ENCODE measurements at regions of chr13 and their contacts with region 1.

Region 1: DNA sequence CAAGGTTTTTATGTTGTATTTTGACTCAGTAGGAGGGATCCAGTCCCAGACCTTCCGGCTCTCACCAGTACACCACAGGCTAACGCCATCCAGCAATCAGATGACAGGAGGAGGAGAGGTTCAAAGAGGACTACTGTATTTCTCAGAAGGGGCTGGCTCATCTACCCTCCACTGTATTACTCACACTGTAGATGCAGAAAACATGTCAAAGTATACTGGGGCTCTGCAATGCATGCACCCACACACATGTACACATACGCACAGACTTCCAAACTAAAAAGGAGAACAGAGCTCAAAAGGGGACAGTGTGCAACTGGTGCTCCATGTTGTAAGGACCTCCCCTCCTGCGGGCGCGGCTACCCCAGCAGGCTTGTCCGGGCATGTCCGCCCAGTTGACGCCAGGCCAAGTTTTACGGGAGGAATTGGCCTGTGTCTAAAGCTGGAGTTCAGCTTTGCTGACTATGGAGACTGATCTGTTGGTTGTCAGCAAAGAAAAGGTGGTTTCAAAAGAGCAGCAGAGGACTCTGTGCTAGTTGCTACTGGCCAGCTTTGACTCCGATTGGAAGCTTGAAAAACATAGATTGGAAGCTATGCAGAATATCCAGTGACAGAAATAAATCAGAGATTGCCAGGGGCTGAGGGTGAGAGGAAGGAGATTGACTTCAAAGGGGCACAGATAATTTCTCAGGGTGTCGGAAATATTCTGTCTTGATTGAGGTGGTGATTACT is 314.2 kb downstream of the DLEU7 start:
- DNase-seq: peak in 1 of 2 experiments; percentile 67
- H3K4me3 ChIP-seq: no peak overlapping the region
- H3K27ac ChIP-seq: no peak overlapping the region
- H3K4me1 ChIP-seq: no peaks in the 10 kb centered on the region
- H3K27me3 ChIP-seq: no peaks in the 10 kb centered on the region
- CTCF ChIP-seq: no peak

Region 2: GRCh38 chr13:50170447-50171037 is 358.8 kb before region 1 on chr13:
- CTCF ChIA-PET with region 1: no interaction called
- POLR2A ChIA-PET with region 1: no interaction called
- intact Hi-C with region 1: loop called (anchors 1 kb)
- DNase-seq: no peak
- H3K4me3 ChIP-seq: no peak overlapping the region
- H3K27ac ChIP-seq: no peak overlapping the region
- H3K4me1 ChIP-seq: no peaks in the 10 kb centered on the region
- H3K27me3 ChIP-seq: no peaks in the 10 kb centered on the region
- CTCF ChIP-seq: peak; percentile 56

Measured in PC-9 (cell line).